Heart right ventricle (tissue), 16 donors: ENCODE measurements at regions of chr1 and their contacts with region 1.

Region 1: DNA sequence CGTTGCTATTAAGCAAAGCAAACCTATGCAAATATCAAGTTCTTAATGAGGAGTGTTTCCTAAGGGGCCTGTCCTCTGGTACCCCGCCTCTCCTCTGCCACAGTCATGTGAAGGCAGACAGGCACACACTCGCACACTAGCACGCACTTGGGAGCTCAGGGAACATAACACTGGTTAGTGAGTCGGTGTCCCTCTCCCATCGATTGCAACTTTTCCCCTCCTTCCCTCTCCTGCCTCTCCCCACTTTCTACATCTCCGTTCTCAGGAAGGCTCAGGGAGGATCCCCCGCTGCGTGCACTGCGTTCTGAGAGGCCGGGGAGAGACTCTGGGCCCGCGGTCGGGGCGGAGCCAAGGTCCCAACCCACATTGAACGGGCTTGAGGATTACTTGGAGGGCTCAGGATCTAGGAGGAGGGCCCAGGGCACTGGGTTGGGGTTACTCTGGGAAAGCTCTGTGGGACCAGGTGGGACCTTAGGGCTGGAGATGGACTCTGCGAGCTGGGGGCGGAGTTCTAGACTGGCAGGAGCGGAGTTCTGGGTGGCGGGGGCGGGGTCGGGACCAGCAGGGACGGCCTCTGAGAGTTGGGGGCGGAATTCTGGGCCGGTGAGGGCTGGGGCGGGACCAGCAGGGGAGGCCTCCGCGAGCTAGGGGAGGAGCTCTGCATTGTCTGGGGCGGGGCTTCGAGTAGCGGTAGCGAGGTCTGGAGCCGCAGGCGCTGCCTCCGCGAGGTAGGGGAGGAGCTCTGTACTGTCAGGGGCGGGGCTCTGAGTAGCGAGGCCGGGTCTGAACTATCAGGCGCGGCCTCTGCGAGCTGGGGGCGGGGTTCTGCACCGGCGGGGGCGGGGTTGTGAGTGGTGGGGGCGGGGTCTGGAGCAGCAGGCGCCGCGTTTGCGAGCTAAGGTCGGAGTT is 533 bp upstream of the LEPR start:
- DNase-seq: peak; percentile 98 to 99
- ATAC-seq: peak; percentile 96 to 99 (median 98)
- H3K4me3 ChIP-seq: peak overlapping the region; percentile 50 to 96 (median 82)
- H3K27ac ChIP-seq: peak overlapping the region; percentile 89 to 99 (median 98)
- H3K4me1 ChIP-seq: peaks cover 0 to 40% (median 34%) of the 10 kb centered on the region in 9 donors
- H3K27me3 ChIP-seq: no peaks in the 10 kb centered on the region
- CTCF ChIP-seq: no peak

Region 2: DNA sequence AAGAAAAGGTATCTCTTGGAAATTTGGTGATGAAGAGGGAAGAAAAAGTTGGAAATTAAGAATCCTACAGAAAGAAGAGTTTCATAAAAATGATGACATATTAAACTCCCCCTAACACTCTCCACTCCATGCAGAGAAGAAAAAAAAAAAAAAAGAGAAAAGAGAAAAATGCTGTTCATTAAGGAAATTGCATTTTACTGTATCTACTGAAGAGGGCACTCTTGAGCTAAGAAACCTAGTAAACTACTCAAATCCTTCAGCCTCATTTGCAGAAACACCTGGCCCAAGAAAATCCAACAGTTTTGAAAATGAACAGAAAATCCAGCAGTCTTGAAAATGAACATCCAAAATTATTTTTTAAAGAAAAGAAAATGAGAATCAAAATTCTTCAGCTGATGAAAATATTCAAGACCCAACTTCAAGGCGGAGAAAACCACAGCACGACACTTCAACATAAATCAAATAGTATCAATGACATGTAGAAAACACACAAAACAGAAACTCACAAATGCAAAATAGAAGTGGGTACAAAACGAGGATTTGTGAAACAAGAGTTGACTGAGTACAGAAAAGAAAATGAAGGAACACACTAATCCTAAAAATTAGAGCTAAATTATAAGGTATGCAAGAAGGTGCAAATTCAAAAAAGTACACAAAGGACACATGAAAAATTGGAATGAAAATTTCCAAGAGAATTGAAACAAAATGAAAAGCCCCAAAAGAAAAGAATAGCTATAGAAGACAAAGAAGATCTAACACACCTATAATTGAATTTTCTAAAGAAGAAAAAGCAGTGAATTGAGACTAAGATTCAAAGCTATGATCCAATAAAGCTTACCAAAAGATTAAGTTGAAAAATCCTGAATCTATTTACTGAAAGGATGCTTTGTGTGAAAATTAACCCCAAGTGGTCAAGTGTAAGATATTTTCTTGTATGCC is 183.8 kb before region 1 on chr1:
- intact Hi-C with region 1: loop called in 3 of 10 experiments (anchors 10 kb)
- DNase-seq: no peak
- ATAC-seq: no peak
- H3K4me3 ChIP-seq: no peak overlapping the region
- H3K27ac ChIP-seq: no peak overlapping the region
- H3K4me1 ChIP-seq: peaks cover 0 to 14% (median 0%) of the 10 kb centered on the region in 9 donors
- H3K27me3 ChIP-seq: no peaks in the 10 kb centered on the region
- CTCF ChIP-seq: peak; percentile 37 to 70 (median 60)

Region 3: GRCh38 chr1:65247513-65248359 is 172.2 kb before region 1 on chr1:
- intact Hi-C with region 1: loop called in 5 of 10 experiments (anchors 5 to 10 kb)
- DNase-seq: peak in 1 of 2 donors; percentile 61
- ATAC-seq: peak; percentile 52 to 87 (median 74)
- H3K4me3 ChIP-seq: no peak overlapping the region
- H3K27ac ChIP-seq: peak overlapping the region in 5 of 10 donors; percentile 1 to 55 (median 31)
- H3K4me1 ChIP-seq: peaks cover 0 to 14% (median 9%) of the 10 kb centered on the region in 9 donors
- H3K27me3 ChIP-seq: peaks cover 0 to 6% (median 0%) of the 10 kb centered on the region in 7 donors
- CTCF ChIP-seq: no peak

Region 4: DNA sequence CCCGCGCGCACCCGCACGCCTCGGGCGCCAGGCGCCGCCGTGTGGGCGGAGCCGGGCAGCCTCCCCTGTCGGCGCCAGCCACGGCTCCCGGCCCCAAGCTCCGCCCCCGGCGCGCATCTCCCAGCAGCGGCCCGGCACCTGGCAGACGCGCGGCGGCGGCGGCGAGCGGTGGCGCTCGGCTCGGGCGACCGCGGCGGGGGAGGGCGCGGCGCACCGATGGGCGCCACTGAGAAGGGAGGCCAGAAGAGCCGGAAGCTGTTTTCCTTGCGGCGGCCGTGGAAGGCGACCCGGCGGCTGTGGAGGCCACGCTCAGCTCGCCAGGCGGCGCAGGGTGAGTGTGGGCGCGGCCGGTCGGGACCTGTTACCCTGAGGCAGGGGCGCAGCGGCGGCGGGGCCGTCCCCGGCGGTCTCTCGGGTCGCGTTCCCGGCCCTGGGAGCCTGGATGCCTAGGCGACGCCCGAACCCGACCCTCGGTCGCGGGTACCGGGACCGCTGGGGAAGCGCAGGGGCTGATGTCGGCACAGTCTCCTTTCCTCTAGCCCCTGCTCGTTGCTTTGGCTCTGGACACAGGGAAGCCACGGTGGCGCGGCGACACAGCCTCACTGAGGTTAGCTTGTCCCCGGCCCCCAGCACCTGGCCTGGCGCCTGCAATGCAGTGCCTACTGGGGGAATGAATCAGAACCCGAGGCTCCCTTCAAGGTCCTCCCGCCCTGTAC is 165.5 kb before region 1 on chr1:
- intact Hi-C with region 1: loop called in 6 of 10 experiments (anchors 2 to 10 kb)
- DNase-seq: peak; percentile 67 to 83
- ATAC-seq: peak; percentile 79 to 96 (median 92)
- H3K4me3 ChIP-seq: peak overlapping the region; percentile 70 to 89 (median 80)
- H3K27ac ChIP-seq: peak overlapping the region; percentile 19 to 80 (median 60)
- H3K4me1 ChIP-seq: peaks cover 0 to 33% (median 15%) of the 10 kb centered on the region in 9 donors
- H3K27me3 ChIP-seq: peaks cover 0 to 13% (median 0%) of the 10 kb centered on the region in 7 donors
- CTCF ChIP-seq: peak in 5 of 9 donors; percentile 26 to 43 (median 36)

Region 5: GRCh38 chr1:65265651-65266351 is 154.1 kb before region 1 on chr1:
- intact Hi-C with region 1: loop called in 3 of 10 experiments (anchors 10 kb)
- DNase-seq: peak; percentile 45 to 48
- ATAC-seq: peak; percentile 77 to 97 (median 93)
- H3K4me3 ChIP-seq: peak overlapping the region; percentile 47 to 73 (median 62)
- H3K27ac ChIP-seq: peak overlapping the region in 9 of 10 donors; percentile 53 to 77 (median 63)
- H3K4me1 ChIP-seq: peaks cover 0 to 24% (median 20%) of the 10 kb centered on the region in 9 donors
- H3K27me3 ChIP-seq: peaks cover 0 to 23% (median 7%) of the 10 kb centered on the region in 7 donors
- CTCF ChIP-seq: peak in 6 of 9 donors; percentile 24 to 53 (median 40)

Region 6: DNA sequence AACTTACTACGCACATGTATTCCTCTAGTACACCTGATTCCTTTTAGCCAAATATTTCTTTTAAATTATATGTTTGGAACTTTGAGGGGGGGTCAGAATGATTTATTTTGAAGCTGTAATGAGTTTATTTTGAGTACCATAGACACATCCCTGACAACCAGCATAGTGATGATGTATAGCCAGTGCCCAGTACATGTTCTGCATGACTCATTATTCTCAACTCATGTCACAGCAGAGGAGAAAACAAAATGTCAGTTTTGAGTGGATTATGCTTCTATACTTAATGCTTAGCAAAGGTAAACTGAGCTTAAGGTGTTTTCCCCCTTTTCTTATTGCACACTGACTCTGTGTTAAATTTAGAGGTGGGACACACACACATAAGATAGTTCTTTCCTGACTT is 21.9 kb before region 1 on chr1:
- intact Hi-C with region 1: loop called in 1 of 10 experiments (anchors 1 kb)
- DNase-seq: no peak
- ATAC-seq: no peak
- H3K4me3 ChIP-seq: no peak overlapping the region
- H3K27ac ChIP-seq: no peak overlapping the region
- H3K4me1 ChIP-seq: peaks cover 0 to 7% (median 0%) of the 10 kb centered on the region in 9 donors
- H3K27me3 ChIP-seq: no peaks in the 10 kb centered on the region
- CTCF ChIP-seq: no peak